Heart left ventricle (tissue), 16 donors: ENCODE measurements at regions of chr12 and their contacts with region 1.

Region 1: DNA sequence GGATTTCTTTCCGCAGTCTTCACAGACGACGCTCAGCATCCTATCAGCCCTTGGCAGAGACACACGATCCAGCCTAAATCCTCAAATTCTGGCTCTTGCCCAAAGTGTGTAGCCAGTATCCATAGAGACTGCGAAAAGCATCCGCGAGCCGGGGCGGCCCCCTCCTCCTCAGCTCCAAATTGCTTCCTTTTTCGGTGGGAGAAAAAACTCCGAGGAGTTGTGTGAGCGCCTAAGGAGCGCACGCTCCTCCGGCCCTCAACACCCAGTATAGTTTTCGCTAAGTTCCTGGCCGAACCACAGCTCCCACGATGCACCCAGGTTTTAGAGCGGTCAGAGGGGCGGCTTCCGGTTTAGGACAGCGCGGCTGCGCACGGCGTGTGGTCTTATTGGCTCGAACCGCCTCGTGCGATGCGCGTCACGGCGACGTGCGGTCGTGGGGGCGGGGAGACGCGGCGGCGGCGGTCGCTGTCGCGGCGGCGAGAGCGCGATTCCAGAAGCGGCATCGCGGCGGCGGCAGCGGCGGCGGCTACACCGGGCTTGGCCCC is at the start of gene ADIPOR2:
- DNase-seq: peak; percentile 96 to 98 (median 97)
- ATAC-seq: peak; percentile 99 to 100 (median 100)
- H3K4me3 ChIP-seq: peak within 1 kb of the TSS; percentile 62 to 99 (median 92)
- H3K27ac ChIP-seq: peak within 1 kb of the TSS; percentile 72 to 97 (median 91)
- H3K4me1 ChIP-seq: peaks cover 0 to 39% (median 14%) of the 10 kb centered on the region in 12 donors
- H3K27me3 ChIP-seq: no peaks in the 10 kb centered on the region
- CTCF ChIP-seq: no peak
- POLR2A ChIP-seq: peak; percentile 50 to 93
- total RNA-seq, gene ADIPOR2: 28.1 to 52.5 (median 36.7) TPM

Region 2: DNA sequence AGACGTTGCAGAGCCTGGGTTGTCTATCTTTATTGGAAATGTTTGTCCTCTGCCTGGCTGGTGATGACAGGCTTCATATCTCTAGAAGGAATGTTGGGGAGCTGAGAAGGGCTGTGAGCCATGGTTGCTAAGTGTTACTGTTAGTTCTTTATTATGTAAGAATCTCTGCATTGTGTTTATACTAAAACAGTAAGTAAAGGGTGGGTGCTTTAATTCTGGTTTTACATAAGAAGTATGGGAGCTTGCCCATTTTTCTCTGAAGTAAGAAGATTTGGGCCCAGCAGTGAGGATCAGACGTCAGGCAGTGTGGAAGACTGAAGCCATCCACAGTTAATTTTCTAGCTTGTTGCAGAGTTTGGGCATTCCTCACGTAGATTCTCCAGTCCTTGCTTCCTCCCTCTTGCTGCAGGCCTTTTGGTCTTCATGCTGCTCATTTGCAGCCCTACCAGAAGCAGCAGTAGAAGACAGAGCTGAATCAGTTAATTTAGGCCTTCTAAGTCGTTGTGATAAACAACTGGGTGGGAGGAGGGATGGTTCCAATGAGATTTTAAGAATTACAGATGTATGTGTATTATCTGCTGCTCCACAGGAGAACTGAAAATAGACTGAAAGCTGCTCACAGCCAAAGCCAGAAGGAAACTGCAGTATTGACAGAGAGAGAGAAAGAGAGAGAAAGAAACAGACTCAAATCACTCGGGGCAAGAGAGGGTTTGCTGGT is 40.2 kb before region 1 on chr12:
- intact Hi-C with region 1: loop called in 2 of 10 experiments (anchors 5 kb)
- DNase-seq: peak in 1 of 5 donors; percentile 37
- ATAC-seq: peak; percentile 76 to 84 (median 80)
- H3K4me3 ChIP-seq: peak overlapping the region in 2 of 12 donors; percentile 3 to 13
- H3K27ac ChIP-seq: peak overlapping the region in 11 of 12 donors; percentile 6 to 80 (median 61)
- H3K4me1 ChIP-seq: peaks cover 0 to 37% (median 21%) of the 10 kb centered on the region in 12 donors
- H3K27me3 ChIP-seq: no peaks in the 10 kb centered on the region
- CTCF ChIP-seq: no peak
- POLR2A ChIP-seq: no peak

Region 3: DNA sequence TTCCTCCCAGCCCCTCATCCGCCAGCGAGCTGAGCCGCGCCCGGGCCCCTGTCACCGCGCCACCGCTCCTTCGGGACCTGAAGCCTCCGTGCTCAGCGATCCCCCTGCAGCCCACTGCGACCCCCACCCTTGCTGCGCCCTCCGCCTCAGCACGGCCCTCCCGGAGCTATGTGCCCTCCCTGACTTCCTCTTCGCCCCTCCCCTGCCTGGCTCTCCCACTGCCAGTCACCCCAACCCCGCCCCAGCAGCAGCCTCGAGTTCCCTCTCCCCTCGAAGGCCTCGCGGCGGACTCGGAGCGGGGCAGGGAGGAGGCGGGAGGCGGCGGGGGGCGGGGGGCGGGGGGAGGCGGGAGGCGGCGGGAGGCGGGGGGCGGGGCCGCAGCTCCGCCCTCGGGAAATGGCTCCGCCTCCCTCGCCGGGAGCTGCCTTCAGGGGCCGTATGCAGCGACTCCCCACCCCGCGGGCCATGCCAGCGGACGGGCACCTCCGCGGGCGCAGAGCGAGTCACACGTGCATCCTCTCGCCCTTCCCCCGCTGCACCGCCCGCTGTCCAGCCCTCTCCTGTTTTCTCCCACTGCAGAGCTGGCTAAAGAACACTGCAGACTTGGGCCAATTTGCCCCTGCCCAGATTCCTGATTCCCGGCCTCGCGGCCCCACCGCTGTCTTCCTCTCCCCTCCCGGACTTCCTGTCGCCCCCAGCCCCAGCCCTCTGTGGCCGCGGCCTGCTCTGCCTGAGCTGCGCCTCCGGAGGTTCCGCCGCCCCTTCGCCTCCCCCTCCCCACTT is 28.9 kb before region 1 on chr12:
- intact Hi-C with region 1: loop called in 4 of 10 experiments (anchors 2 to 5 kb)
- DNase-seq: peak; percentile 90 to 95 (median 94)
- ATAC-seq: peak; percentile 68 to 91 (median 89)
- H3K4me3 ChIP-seq: peak overlapping the region in 11 of 12 donors; percentile 46 to 76 (median 62)
- H3K27ac ChIP-seq: peak overlapping the region; percentile 78 to 100 (median 96)
- H3K4me1 ChIP-seq: peaks cover 3 to 50% (median 28%) of the 10 kb centered on the region in 12 donors
- H3K27me3 ChIP-seq: no peaks in the 10 kb centered on the region
- CTCF ChIP-seq: no peak
- POLR2A ChIP-seq: peak; percentile 12 to 60

Region 4: GRCh38 chr12:1760566-1761382 is 70.1 kb after region 1 on chr12:
- intact Hi-C with region 1: loop called in 1 of 10 experiments (anchors 10 kb)
- DNase-seq: no peak
- ATAC-seq: peak in 3 of 4 donors; percentile 37 to 68 (median 50)
- H3K4me3 ChIP-seq: no peak overlapping the region
- H3K27ac ChIP-seq: no peak overlapping the region
- H3K4me1 ChIP-seq: peaks cover 0 to 19% (median 0%) of the 10 kb centered on the region in 12 donors
- H3K27me3 ChIP-seq: no peaks in the 10 kb centered on the region
- CTCF ChIP-seq: no peak
- POLR2A ChIP-seq: no peak

Region 5: GRCh38 chr12:1776170-1776948 is 85.7 kb after region 1 on chr12:
- intact Hi-C with region 1: loop called in 3 of 10 experiments (anchors 5 kb)
- DNase-seq: no peak
- ATAC-seq: peak; percentile 33 to 76 (median 57)
- H3K4me3 ChIP-seq: no peak overlapping the region
- H3K27ac ChIP-seq: peak overlapping the region in 3 of 12 donors; percentile 1 to 34 (median 5)
- H3K4me1 ChIP-seq: peaks cover 0 to 52% (median 31%) of the 10 kb centered on the region in 12 donors
- H3K27me3 ChIP-seq: no peaks in the 10 kb centered on the region
- CTCF ChIP-seq: no peak
- POLR2A ChIP-seq: no peak